Naive thymus-derived CD4-positive, alpha-beta T cell (primary cell): ENCODE measurements at regions of chr11 and their contacts with region 1.

Region 1: DNA sequence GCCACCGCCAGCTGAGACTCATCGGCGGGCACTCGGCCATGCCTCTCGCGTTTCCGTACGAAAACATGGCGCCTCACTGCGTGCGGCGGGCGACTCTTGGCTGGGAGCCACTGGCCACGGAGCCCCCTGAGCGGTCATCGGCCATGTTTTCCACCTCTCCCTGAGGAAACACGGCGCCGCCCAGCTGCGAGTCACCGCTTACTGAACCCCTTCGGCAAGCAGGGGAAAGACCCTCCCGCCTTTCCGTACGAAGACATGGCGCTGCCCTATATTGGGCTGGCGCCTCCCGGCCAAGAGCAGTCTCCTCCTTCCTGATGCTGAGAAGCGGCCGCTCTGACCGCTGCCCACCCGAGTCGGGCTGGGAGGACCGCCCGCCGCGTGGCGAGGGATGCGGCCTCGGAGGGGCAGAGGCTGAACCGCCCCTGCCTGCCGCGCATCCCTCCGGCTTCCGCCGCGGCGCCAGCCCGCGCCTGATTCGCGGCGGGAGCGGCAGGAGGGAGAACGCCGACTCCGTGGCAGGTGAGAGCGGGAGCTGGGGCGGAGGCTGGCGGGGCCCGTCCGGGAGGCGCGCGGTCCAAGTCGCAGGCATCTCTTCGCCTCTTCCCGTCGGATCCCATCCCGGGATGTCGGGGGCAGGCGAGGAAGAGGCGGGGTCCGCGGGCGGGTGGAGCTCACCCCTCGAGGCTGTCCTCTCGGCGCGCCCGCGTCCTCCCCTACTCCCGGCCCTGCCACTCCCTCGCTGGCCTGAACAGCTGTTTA is at the start of gene TCP11L1:
- DNase-seq: peak; percentile 57 to 88 (median 76)
- ATAC-seq: peak; percentile 93
- H3K4me3 ChIP-seq: peak within 1 kb of the TSS; percentile 100
- H3K4me3 Mint-ChIP-seq: peak within 1 kb of the TSS; percentile 91 to 97 (median 94)
- H3K27ac ChIP-seq: peak within 1 kb of the TSS; percentile 82
- H3K27ac Mint-ChIP-seq: peak within 1 kb of the TSS; percentile 77 to 95 (median 92)
- H3K4me1 ChIP-seq: peaks cover 3 to 9% of the 10 kb centered on the region in 2 donors
- H3K4me1 Mint-ChIP-seq: peaks cover 0 to 17% (median 14%) of the 10 kb centered on the region in 7 donors
- H3K27me3 ChIP-seq: no peaks in the 10 kb centered on the region
- H3K27me3 Mint-ChIP-seq: peaks cover 0 to 17% (median 0%) of the 10 kb centered on the region in 5 donors
- total RNA-seq, gene TCP11L1: 9.1 to 17.1 (median 13.3) TPM

Region 2: DNA sequence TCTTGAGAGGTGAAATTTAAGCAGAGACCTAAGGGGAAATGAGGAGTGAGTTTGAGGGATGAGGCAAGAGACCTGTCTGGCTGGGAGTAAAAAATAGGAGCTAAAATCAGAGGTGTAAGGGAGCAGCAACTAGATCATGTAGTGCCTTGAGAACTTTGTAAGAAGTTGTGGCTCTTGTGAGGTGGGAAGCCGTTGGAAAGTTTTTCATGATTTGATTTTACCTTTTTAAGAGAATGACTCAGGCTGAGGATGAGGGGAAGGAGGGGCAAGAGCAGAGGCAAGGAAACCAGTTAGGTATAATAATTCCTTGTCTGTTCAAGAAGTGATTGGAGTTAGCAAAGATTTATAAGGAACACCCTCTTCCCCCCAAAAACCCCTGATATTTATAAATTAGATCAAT is 121.0 kb before region 1 on chr11:
- CTCF ChIA-PET with region 1: no interaction called
- POLR2A ChIA-PET with region 1: no interaction called
- intact Hi-C with region 1: no loop called
- DNase-seq: no peak
- ATAC-seq: no peak
- H3K4me3 ChIP-seq: no peak overlapping the region
- H3K4me3 Mint-ChIP-seq: no peak overlapping the region
- H3K27ac ChIP-seq: no peak overlapping the region
- H3K27ac Mint-ChIP-seq: peak overlapping the region in 2 of 9 donors; percentile 1 to 47
- H3K4me1 ChIP-seq: peaks cover 0 to 8% of the 10 kb centered on the region in 2 donors
- H3K4me1 Mint-ChIP-seq: peaks cover 8 to 27% (median 18%) of the 10 kb centered on the region in 7 donors
- H3K27me3 ChIP-seq: no peaks in the 10 kb centered on the region
- H3K27me3 Mint-ChIP-seq: no peaks in the 10 kb centered on the region

Region 3: DNA sequence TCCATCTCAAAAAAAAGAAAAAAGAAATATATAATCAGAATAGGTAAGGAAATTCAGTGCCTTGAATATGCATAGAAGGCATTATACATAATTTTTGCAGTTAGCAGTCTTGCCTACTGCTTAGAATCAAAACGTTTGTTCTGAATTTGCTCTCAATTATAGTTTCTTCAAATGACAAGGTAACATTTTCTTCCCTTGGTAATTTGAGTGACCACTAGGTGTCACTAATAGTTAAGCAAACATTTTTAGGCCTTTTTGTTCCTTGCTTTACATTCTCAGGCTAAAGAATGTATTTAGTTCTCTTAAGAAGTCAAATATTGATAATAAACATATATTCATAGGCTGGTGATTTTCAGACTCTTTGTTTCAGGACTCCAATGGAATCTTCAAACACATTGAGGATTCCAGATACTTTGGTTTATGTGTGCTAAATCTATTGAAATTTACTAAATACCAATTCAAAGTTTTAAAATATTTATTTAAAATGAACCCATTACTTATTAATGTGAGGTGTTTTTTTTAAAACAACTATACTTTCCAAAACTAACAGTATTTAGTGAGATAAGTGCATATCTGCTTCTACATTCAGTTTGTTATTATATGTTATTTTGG is 78.8 kb before region 1 on chr11:
- CTCF ChIA-PET with region 1: interaction called, 10 read pairs
- POLR2A ChIA-PET with region 1: interaction called, 3 read pairs
- intact Hi-C with region 1: loop called (anchors 1 kb)
- DNase-seq: peak in 7 of 9 donors; percentile 33 to 66 (median 55)
- ATAC-seq: peak; percentile 67
- H3K4me3 ChIP-seq: no peak overlapping the region
- H3K4me3 Mint-ChIP-seq: no peak overlapping the region
- H3K27ac ChIP-seq: no peak overlapping the region
- H3K27ac Mint-ChIP-seq: no peak overlapping the region
- H3K4me1 ChIP-seq: no peaks in the 10 kb centered on the region
- H3K4me1 Mint-ChIP-seq: peaks cover 0 to 5% (median 0%) of the 10 kb centered on the region in 7 donors
- H3K27me3 ChIP-seq: no peaks in the 10 kb centered on the region
- H3K27me3 Mint-ChIP-seq: no peaks in the 10 kb centered on the region

Region 4: GRCh38 chr11:33000181-33000580 is 39.3 kb before region 1 on chr11:
- CTCF ChIA-PET with region 1: no interaction called
- POLR2A ChIA-PET with region 1: no interaction called
- intact Hi-C with region 1: loop called in 1 of 2 experiments (anchors 5 kb)
- DNase-seq: no peak
- ATAC-seq: no peak
- H3K4me3 ChIP-seq: no peak overlapping the region
- H3K4me3 Mint-ChIP-seq: no peak overlapping the region
- H3K27ac ChIP-seq: no peak overlapping the region
- H3K27ac Mint-ChIP-seq: no peak overlapping the region
- H3K4me1 ChIP-seq: peaks cover 0 to 11% of the 10 kb centered on the region in 2 donors
- H3K4me1 Mint-ChIP-seq: peaks cover 7 to 17% (median 13%) of the 10 kb centered on the region in 7 donors
- H3K27me3 ChIP-seq: no peaks in the 10 kb centered on the region
- H3K27me3 Mint-ChIP-seq: peaks cover 0 to 73% (median 0%) of the 10 kb centered on the region in 5 donors

Region 5: DNA sequence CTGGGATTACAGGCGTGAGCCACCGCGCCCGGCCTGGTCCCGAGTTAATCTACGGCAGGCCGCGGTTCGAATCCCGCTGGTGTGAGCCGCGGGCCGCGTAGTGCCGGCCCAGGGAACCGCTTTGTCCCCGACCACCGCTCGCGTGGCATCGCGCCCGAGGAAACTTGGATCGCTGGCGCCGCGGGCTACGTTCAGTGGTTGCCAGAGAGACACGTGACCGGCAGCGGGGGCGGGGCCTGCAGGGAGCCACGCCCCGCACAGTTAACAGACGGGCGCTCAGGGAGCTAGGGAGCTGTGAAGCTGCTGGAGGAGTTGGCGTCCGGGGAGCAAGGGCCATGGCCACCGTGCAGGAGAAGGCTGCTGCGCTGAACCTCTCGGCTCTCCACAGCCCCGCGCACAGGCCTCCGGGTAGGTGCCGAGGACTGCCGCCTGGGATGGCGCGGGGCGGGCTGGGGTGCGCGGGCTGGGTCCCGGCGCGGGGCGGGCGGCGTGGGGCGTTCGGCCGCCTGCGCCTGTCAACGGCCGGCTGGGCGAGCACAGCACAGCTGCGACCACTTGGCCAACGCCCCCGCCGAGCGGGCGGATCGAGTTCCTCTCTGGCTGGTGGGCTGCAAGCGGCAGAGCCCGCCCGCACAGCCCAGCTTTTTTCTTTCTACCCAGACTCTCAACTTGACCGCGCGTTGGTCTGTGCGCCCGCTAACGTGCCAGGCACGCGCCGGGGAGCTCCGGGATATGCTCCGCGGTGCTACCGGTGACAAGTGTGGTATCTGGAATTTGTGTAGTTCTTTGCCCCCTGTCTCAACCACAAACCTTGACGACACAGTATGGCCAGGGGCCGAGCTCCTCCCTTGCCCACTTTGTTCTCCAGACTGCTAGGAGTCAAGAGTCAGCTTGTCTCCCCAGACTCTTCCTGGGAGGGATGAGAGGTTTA is 23.6 kb before region 1 on chr11 and contains the start of gene DEPDC7:
- CTCF ChIA-PET with region 1: interaction called, 6 read pairs
- POLR2A ChIA-PET with region 1: interaction called, 19 read pairs
- intact Hi-C with region 1: loop called (anchors 1 kb)
- DNase-seq: peak; percentile 72 to 84 (median 81)
- ATAC-seq: peak; percentile 90
- H3K4me3 ChIP-seq: peak within 1 kb of the TSS; percentile 65
- H3K4me3 Mint-ChIP-seq: peak within 1 kb of the TSS; percentile 86 to 93 (median 90)
- H3K27ac ChIP-seq: peak within 1 kb of the TSS; percentile 50
- H3K27ac Mint-ChIP-seq: peak within 1 kb of the TSS in 6 of 9 donors; percentile 63 to 77 (median 69)
- H3K4me1 ChIP-seq: peaks cover 14 to 23% of the 10 kb centered on the region in 2 donors
- H3K4me1 Mint-ChIP-seq: peaks cover 14 to 73% (median 58%) of the 10 kb centered on the region in 7 donors
- H3K27me3 ChIP-seq: peaks cover 0 to 7% of the 10 kb centered on the region in 2 donors
- H3K27me3 Mint-ChIP-seq: peaks cover 0 to 74% (median 5%) of the 10 kb centered on the region in 5 donors
- total RNA-seq, gene DEPDC7: 0.65 to 9.6 (median 2.1) TPM

Region 6: DNA sequence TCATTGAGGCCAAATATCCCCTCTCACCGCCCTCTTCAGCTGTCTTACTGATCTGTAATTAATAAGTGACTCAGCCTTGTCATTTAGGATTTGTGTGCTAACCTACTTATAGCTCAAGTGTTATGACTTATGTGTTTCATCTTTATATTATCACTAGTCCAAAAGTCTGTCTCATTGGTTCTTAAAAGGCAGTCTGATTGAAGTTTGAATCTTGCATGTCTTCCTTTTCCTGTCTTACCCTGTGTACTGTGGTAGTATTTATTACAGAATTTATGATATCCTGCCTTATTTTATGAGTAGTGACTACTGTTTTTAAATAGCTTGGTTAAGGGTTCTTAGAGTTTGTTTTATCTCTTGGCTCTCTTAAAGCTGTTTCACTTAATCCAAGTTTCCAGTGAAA is 17.5 kb before region 1 on chr11:
- CTCF ChIA-PET with region 1: interaction called, 4 read pairs
- POLR2A ChIA-PET with region 1: interaction called, 19 read pairs
- intact Hi-C with region 1: no loop called
- DNase-seq: peak in 4 of 9 donors; percentile 20 to 26 (median 22)
- ATAC-seq: peak; percentile 34
- H3K4me3 ChIP-seq: no peak overlapping the region
- H3K4me3 Mint-ChIP-seq: peak overlapping the region in 5 of 10 donors; percentile 13 to 64 (median 32)
- H3K27ac ChIP-seq: no peak overlapping the region
- H3K27ac Mint-ChIP-seq: peak overlapping the region in 5 of 9 donors; percentile 1 to 37 (median 13)
- H3K4me1 ChIP-seq: peaks cover 0 to 8% of the 10 kb centered on the region in 2 donors
- H3K4me1 Mint-ChIP-seq: peaks cover 0 to 43% (median 36%) of the 10 kb centered on the region in 7 donors
- H3K27me3 ChIP-seq: peaks cover 0 to 5% of the 10 kb centered on the region in 2 donors
- H3K27me3 Mint-ChIP-seq: peaks cover 0 to 49% (median 1%) of the 10 kb centered on the region in 5 donors

Region 7: DNA sequence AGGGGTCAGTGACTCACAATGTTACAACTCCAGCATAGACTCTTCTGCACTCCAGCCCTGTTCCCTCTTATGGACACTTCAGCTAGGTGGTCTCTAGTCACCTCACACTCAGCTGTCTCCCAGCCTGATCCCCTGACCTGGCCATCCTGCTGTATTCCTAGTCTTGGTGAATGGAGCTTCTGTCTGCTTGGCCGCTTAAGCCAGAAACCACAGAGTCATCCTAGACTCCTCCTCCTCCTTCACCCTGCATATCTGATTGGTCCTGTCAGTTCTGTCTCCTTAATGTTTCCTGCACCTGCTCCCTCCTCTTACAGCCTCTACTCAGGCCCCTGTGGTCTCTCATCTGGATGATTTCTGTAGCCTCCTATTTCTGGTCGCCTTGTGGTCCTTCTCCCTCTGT is 362.6 kb after region 1 on chr11:
- CTCF ChIA-PET with region 1: no interaction called
- POLR2A ChIA-PET with region 1: no interaction called
- intact Hi-C with region 1: no loop called
- DNase-seq: no peak
- ATAC-seq: no peak
- H3K4me3 ChIP-seq: no peak overlapping the region
- H3K4me3 Mint-ChIP-seq: no peak overlapping the region
- H3K27ac ChIP-seq: no peak overlapping the region
- H3K27ac Mint-ChIP-seq: no peak overlapping the region
- H3K4me1 ChIP-seq: no peaks in the 10 kb centered on the region
- H3K4me1 Mint-ChIP-seq: no peaks in the 10 kb centered on the region
- H3K27me3 ChIP-seq: no peaks in the 10 kb centered on the region
- H3K27me3 Mint-ChIP-seq: peaks cover 0 to 22% (median 15%) of the 10 kb centered on the region in 5 donors